CD8-positive, alpha-beta memory T cell (primary cell): ENCODE measurements at regions of chr17 and their contacts with region 1.

Region 1: GRCh38 chr17:56893216-56893863 is 20.5 kb downstream of the TRIM25 start:
- DNase-seq: no peak
- H3K4me3 ChIP-seq: no peak overlapping the region
- H3K4me3 Mint-ChIP-seq: no peak overlapping the region
- H3K27ac ChIP-seq: no peak overlapping the region
- H3K27ac Mint-ChIP-seq: peak overlapping the region in 1 of 8 donors; percentile 31
- H3K4me1 ChIP-seq: no peaks in the 10 kb centered on the region
- H3K4me1 Mint-ChIP-seq: peaks cover 0 to 5% (median under 1%) of the 10 kb centered on the region in 3 donors
- H3K27me3 ChIP-seq: no peaks in the 10 kb centered on the region
- H3K27me3 Mint-ChIP-seq: no peaks in the 10 kb centered on the region

Region 2: DNA sequence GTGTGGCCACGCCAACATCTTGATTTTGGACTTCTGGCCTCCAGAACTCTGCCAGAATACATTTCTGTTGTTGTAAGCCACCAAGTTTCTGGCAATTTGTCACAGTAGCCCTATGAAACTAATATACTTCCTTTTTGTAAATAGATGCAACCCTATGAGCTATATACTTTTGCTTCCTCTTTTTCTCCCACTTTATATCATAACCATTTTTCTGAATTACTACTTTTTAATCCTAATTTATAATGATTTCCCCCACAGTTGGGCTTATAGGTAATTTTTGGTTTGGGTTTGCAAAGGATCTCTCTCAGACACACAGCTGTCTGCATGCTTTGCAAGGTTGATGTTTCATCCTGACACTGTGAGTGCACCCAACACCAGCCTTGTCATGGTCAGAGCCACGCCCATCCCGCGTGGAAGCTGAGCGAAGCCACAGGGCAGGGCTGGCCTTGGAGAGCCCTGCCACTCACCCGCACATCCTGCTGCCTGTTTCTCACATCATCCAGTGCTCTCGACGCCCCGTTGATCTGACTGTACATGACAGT is 14.7 kb after region 1 on chr17:
- CTCF ChIA-PET with region 1: interaction called, 10 read pairs
- POLR2A ChIA-PET with region 1: no interaction called
- DNase-seq: peak in 2 of 5 donors; percentile 17 to 19
- H3K4me3 ChIP-seq: no peak overlapping the region
- H3K4me3 Mint-ChIP-seq: peak overlapping the region in 5 of 7 donors; percentile 15 to 43 (median 35)
- H3K27ac ChIP-seq: no peak overlapping the region
- H3K27ac Mint-ChIP-seq: peak overlapping the region; percentile 8 to 94 (median 90)
- H3K4me1 ChIP-seq: peaks cover 42% of the 10 kb centered on the region
- H3K4me1 Mint-ChIP-seq: peaks cover 54 to 73% (median 64%) of the 10 kb centered on the region in 3 donors
- H3K27me3 ChIP-seq: no peaks in the 10 kb centered on the region
- H3K27me3 Mint-ChIP-seq: no peaks in the 10 kb centered on the region